Motor neuron (in vitro differentiated cells): ENCODE measurements at regions of chr12 and their contacts with region 1.

Region 1: GRCh38 chr12:130335517-130336392 is 1.9 kb upstream of the PIWIL1 start:
- ATAC-seq: peak in 5 of 8 experiments; percentile 41 to 68 (median 50)
- H3K4me3 ChIP-seq: no peak overlapping the region
- H3K27ac ChIP-seq: no peak overlapping the region
- H3K4me1 ChIP-seq: no peaks in the 10 kb centered on the region

Region 2: DNA sequence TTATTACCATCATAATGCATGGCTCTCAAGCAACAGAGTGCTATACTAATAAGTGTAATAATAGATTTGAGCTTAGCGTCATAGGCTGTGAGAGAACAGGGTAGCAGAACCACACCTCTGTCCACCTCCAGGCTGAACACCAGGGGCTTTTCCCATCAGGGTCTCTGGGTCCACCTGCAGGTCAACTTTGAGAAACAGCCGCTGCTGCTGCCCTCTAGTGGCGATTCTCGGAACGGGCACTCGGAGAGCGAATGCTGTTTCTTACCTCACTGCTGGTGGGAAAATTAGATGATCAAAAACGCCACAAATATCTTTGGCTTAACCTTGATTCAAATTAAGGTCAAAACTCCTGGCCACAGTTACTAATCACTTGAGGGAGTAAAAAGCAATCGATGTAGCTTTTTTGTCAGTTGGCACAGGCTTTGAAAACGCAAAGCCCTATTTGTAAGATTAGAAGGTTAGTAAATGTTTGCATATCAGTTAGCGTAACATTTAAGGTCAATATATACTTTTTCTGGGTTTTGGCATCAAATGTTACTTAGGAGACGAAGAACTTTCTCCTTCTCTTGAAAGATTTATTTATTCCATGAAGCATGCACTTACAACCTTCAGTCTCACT is 304.1 kb before region 1 on chr12:
- in situ Hi-C with region 1: loop called in 2 of 9 experiments (anchors 25 kb)
- ATAC-seq: peak in 4 of 8 experiments; percentile 39 to 80 (median 58)
- H3K4me3 ChIP-seq: no peak overlapping the region
- H3K27ac ChIP-seq: no peak overlapping the region
- H3K4me1 ChIP-seq: no peaks in the 10 kb centered on the region

Region 3: DNA sequence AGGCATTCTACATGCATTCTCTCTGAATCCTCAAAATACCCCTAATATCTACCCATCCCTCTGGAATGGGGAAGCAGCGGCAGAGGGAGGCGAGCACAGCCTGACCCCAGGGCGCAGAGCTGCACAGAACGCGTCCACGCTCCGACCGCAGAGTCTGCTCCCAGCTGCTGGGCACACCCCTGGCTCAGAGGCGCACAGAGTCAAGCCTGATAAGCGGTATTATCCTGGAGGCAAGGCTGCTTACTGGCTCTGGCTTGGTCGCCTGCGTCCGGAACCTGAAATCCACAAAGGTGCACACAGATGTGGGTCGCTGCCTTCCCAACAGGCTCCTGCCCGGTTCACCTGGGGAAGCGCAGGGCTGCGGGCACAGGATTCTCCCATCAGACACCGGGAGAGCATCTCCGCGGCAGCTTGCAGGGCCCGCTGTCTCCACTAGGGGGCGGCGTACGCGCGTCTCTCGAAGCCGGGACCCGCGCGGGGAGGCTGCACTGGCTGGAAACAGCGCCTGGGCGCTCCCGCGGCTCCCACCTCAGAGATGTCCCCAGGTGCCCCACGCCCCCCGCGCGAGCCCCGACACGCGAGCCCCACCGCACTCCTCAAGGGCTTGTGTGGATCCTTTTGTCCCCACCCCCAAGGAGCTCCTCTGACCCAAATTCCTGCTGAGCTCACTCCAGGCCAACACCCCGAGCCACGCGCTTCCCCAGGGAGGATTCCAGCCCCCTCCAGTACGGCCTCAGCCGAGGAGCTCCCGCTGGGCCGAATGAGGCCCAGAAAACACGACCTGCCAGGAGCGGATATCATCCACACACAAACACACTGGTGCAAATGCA is 293.6 kb before region 1 on chr12:
- in situ Hi-C with region 1: loop called in 6 of 9 experiments (anchors 10 to 25 kb)
- ATAC-seq: peak in 3 of 8 experiments; percentile 72 to 88 (median 84)
- H3K4me3 ChIP-seq: peak overlapping the region in 2 of 5 donors; percentile 21 to 22
- H3K27ac ChIP-seq: no peak overlapping the region
- H3K4me1 ChIP-seq: no peaks in the 10 kb centered on the region

Region 4: GRCh38 chr12:130826149-130826801 is 490.5 kb after region 1 on chr12:
- in situ Hi-C with region 1: no loop called
- ATAC-seq: peak in 6 of 8 experiments; percentile 29 to 95 (median 77)
- H3K4me3 ChIP-seq: no peak overlapping the region
- H3K27ac ChIP-seq: no peak overlapping the region
- H3K4me1 ChIP-seq: peaks cover 0 to 3% of the 10 kb centered on the region in 2 donors